ENCODE measurements at regions of chr7 and their contacts with region 1.

Region 1: DNA sequence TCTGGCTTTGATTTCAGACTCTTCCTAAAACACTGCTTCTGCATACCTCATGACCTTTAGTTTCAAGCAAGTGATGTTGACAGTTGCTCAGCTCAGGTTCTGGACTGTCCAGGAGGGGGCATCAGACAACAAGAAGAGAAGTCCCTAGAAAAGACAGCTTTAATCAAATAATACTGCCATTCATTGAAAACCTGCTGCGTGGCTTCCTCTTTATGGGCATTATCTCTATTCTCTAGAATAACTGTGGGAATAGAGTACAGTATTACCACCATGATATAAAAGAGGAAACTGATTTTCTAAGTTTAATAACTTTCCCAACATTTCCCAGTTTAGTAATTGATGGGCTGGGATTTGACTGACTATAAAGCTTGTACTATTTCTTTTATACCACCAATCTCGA is 170.4 kb downstream of the SNX13 start:
- DNase-seq: peak; percentile 54
- ATAC-seq: peak; percentile 33
- H3K4me3 ChIP-seq: no peak overlapping the region
- H3K4me3 Mint-ChIP-seq: no peak overlapping the region
- H3K27ac ChIP-seq: no peak overlapping the region
- H3K27ac Mint-ChIP-seq: no peak overlapping the region
- H3K4me1 ChIP-seq: peaks cover 0 to 13% of the 10 kb centered on the region in 2 donors
- H3K4me1 Mint-ChIP-seq: peaks cover 8% of the 10 kb centered on the region
- H3K27me3 ChIP-seq: no peaks in the 10 kb centered on the region
- H3K27me3 Mint-ChIP-seq: no peaks in the 10 kb centered on the region
- CTCF ChIP-seq: peak; percentile 61

Region 2: GRCh38 chr7:17782216-17782549 is 12.3 kb after region 1 on chr7:
- CTCF ChIA-PET with region 1: interaction called, 11 read pairs
- POLR2A ChIA-PET with region 1: no interaction called
- intact Hi-C with region 1: no loop called
- DNase-seq: no peak
- ATAC-seq: no peak
- H3K4me3 ChIP-seq: no peak overlapping the region
- H3K4me3 Mint-ChIP-seq: no peak overlapping the region
- H3K27ac ChIP-seq: no peak overlapping the region
- H3K27ac Mint-ChIP-seq: no peak overlapping the region
- H3K4me1 ChIP-seq: no peaks in the 10 kb centered on the region
- H3K4me1 Mint-ChIP-seq: no peaks in the 10 kb centered on the region
- H3K27me3 ChIP-seq: no peaks in the 10 kb centered on the region
- H3K27me3 Mint-ChIP-seq: no peaks in the 10 kb centered on the region
- CTCF ChIP-seq: no peak

Region 3: GRCh38 chr7:17991866-17992648 is 222.1 kb after region 1 on chr7:
- CTCF ChIA-PET with region 1: interaction called, 15 read pairs
- POLR2A ChIA-PET with region 1: no interaction called
- intact Hi-C with region 1: no loop called
- DNase-seq: no peak
- ATAC-seq: no peak
- H3K4me3 ChIP-seq: no peak overlapping the region
- H3K4me3 Mint-ChIP-seq: no peak overlapping the region
- H3K27ac ChIP-seq: no peak overlapping the region
- H3K27ac Mint-ChIP-seq: no peak overlapping the region
- H3K4me1 ChIP-seq: no peaks in the 10 kb centered on the region
- H3K4me1 Mint-ChIP-seq: no peaks in the 10 kb centered on the region
- H3K27me3 ChIP-seq: no peaks in the 10 kb centered on the region
- H3K27me3 Mint-ChIP-seq: peaks cover 13% of the 10 kb centered on the region
- CTCF ChIP-seq: peak; percentile 21

Region 4: DNA sequence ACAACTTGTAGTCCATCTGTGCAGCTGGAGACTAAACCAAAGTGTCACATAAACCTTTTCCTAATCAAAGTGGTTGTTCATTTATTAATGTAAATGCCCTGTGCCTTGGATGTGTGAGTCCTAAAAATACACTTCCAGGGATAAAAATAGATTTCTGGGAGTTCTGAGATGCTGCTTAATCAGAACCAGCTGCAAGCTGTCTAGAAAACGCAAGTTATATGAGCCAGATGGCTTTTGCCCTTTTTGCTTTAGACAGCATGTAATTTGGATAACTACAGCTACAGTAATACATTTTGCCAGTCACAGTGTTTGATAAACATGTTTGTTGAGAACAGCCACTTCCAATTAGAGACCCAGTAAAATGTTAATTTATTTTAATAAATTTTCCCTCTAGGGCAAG is 442.8 kb after region 1 on chr7:
- CTCF ChIA-PET with region 1: interaction called, 11 read pairs
- POLR2A ChIA-PET with region 1: no interaction called
- intact Hi-C with region 1: no loop called
- DNase-seq: no peak
- ATAC-seq: no peak
- H3K4me3 ChIP-seq: no peak overlapping the region
- H3K4me3 Mint-ChIP-seq: no peak overlapping the region
- H3K27ac ChIP-seq: no peak overlapping the region
- H3K27ac Mint-ChIP-seq: no peak overlapping the region
- H3K4me1 ChIP-seq: peaks cover 6 to 7% of the 10 kb centered on the region in 2 donors
- H3K4me1 Mint-ChIP-seq: peaks cover 10% of the 10 kb centered on the region
- H3K27me3 ChIP-seq: no peaks in the 10 kb centered on the region
- H3K27me3 Mint-ChIP-seq: peaks cover 3% of the 10 kb centered on the region
- CTCF ChIP-seq: no peak

Region 5: DNA sequence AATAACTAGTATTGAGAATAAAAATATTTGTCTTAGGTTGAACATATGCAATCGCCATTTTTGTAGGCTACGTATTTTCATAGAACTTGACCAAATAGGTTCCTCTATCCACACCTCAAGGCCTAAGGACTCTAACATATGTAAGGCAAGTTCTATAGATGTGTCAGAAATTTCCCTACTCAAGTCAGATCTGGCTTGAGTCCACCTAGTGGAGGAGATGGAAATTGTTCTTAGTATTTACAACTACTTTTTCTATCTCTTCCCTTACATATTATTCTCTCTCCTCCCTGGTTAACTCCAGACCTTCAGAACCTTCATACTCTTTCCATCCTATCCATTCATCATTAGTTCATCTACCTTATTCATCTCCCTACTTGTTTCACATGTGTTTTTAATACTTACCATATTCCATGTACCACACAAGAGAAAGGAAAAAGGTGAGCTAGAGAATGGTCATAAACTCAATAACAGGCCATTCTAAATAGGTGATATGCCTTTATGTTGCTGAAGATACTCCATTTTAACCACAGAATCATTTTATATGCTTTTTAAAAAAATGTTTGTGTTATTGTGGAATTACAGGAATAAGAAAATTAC is 551.2 kb after region 1 on chr7:
- CTCF ChIA-PET with region 1: interaction called, 16 read pairs
- POLR2A ChIA-PET with region 1: no interaction called
- intact Hi-C with region 1: no loop called
- DNase-seq: peak; percentile 63
- ATAC-seq: peak; percentile 81
- H3K4me3 ChIP-seq: no peak overlapping the region
- H3K4me3 Mint-ChIP-seq: no peak overlapping the region
- H3K27ac ChIP-seq: no peak overlapping the region
- H3K27ac Mint-ChIP-seq: no peak overlapping the region
- H3K4me1 ChIP-seq: peaks cover 4 to 20% of the 10 kb centered on the region in 2 donors
- H3K4me1 Mint-ChIP-seq: peaks cover 39% of the 10 kb centered on the region
- H3K27me3 ChIP-seq: no peaks in the 10 kb centered on the region
- H3K27me3 Mint-ChIP-seq: no peaks in the 10 kb centered on the region
- CTCF ChIP-seq: peak; percentile 81